SK-N-SH (cell line): ENCODE measurements at regions of chr20 and their contacts with region 1.

Region 1: DNA sequence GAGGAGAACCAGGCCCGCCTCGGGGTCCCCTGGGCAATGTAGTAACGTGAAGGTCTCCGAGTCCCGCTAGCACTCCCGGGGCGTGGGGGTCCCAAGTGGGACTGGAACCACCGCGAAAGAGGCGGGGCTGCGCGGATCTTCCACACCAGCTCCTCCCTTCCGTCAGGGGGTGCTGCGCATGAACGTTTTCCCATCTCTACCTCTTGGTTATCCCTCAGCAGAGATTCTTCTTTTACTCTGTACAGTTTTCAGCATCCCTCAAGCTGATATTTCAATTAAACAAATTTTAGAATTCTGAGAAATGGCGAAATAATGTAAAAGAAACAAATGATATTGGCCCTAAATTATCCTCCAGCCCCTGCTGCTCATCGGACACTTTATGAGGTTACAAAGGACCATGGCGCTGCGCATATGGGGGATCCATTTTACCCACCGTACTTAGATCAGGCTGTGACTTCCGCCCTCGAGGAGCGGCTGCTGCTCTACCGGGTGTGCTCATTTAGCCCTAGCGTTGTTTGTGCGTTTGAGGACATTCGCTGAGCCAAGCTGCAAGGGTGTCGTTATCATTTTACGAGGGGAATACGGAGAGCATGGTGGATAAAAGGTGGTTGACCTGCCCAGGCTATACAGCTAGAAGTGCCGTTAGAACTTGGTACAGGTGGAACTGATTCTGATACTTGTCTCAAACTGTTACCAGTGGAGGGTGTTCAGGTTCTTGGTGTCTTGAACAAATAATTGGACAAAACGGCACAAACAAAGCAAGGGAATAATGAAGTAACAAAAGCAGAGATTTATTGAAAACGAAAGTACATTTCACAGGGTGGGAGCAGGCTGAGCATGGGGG is 75.2 kb upstream of the CHD6 start:
- DNase-seq: peak; percentile 77
- H3K4me3 ChIP-seq: peak overlapping the region; percentile 79 to 80
- H3K27ac ChIP-seq: peak overlapping the region; percentile 20 to 95; a peak in 3 of 4 replicates
- H3K4me1 ChIP-seq: peaks cover 0 to 5% of the 10 kb centered on the region in 2 experiments; a peak in 1 of 4 replicates
- H3K27me3 ChIP-seq: no peaks in the 10 kb centered on the region; the same call in 1 of the 2 replicates
- CTCF ChIP-seq: peak; percentile 76
- EP300 ChIP-seq: no peak
- RAD21 ChIP-seq: no peak

Region 2: GRCh38 chr20:41617931-41618806 is 75.2 kb before region 1 on chr20 and contains the start of gene CHD6:
- CTCF ChIA-PET with region 1: interaction called, 5 read pairs
- POLR2A ChIA-PET with region 1: interaction called, 15 read pairs
- DNase-seq: peak; percentile 98
- H3K4me3 ChIP-seq: peak within 1 kb of the TSS; percentile 72 to 92
- H3K27ac ChIP-seq: peak within 1 kb of the TSS; percentile 70 to 94
- H3K4me1 ChIP-seq: peaks cover 15 to 18% of the 10 kb centered on the region in 2 experiments; a peak in 3 of 4 replicates
- H3K27me3 ChIP-seq: no peaks in the 10 kb centered on the region
- CTCF ChIP-seq: no peak
- EP300 ChIP-seq: no peak
- RAD21 ChIP-seq: no peak
- polyA plus RNA-seq, gene CHD6: 7.1 and 8.7 TPM in 2 replicates

Region 3: DNA sequence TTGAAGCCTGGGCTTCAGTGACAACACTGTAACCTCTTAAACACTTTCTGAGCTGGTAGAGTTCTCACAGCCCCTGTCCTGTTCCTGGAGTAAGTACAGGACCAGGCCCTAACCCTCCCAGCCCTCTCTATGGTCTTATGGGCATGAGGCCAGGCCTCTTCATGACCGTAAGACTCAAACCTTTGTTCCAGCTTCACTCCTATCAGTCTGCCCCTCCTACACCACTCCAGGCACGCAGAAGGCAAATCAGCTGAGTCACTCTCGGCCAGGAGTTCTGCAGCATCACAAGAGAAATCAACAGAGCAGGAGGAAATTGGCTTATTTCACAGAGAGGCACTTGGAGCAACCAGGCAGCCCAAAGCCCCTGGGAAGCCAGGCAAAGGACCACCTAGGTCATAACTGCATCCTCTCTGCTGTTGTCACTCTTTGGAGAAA is 49.8 kb before region 1 on chr20:
- CTCF ChIA-PET with region 1: no interaction called
- POLR2A ChIA-PET with region 1: no interaction called
- DNase-seq: no peak
- H3K4me3 ChIP-seq: no peak overlapping the region
- H3K27ac ChIP-seq: no peak overlapping the region
- H3K4me1 ChIP-seq: peaks cover 0 to 2% of the 10 kb centered on the region in 2 experiments; a peak in 1 of 4 replicates
- H3K27me3 ChIP-seq: peaks cover 4% of the 10 kb centered on the region; the same call in 1 of the 2 replicates
- CTCF ChIP-seq: no peak
- EP300 ChIP-seq: no peak
- RAD21 ChIP-seq: no peak

Region 4: GRCh38 chr20:41717483-41717882 is 24.1 kb after region 1 on chr20:
- CTCF ChIA-PET with region 1: interaction called, 29 read pairs
- POLR2A ChIA-PET with region 1: no interaction called
- DNase-seq: peak; percentile 26
- H3K4me3 ChIP-seq: no peak overlapping the region
- H3K27ac ChIP-seq: no peak overlapping the region
- H3K4me1 ChIP-seq: peaks cover 0 to 7% of the 10 kb centered on the region in 2 experiments; a peak in 1 of 4 replicates
- H3K27me3 ChIP-seq: no peaks in the 10 kb centered on the region
- CTCF ChIP-seq: no peak
- EP300 ChIP-seq: no peak
- RAD21 ChIP-seq: no peak

Region 5: GRCh38 chr20:41726727-41727126 is 33.4 kb after region 1 on chr20:
- CTCF ChIA-PET with region 1: interaction called, 12 read pairs
- POLR2A ChIA-PET with region 1: no interaction called
- DNase-seq: no peak
- H3K4me3 ChIP-seq: no peak overlapping the region
- H3K27ac ChIP-seq: no peak overlapping the region
- H3K4me1 ChIP-seq: no peaks in the 10 kb centered on the region
- H3K27me3 ChIP-seq: no peaks in the 10 kb centered on the region
- CTCF ChIP-seq: no peak
- EP300 ChIP-seq: no peak
- RAD21 ChIP-seq: no peak

Region 6: DNA sequence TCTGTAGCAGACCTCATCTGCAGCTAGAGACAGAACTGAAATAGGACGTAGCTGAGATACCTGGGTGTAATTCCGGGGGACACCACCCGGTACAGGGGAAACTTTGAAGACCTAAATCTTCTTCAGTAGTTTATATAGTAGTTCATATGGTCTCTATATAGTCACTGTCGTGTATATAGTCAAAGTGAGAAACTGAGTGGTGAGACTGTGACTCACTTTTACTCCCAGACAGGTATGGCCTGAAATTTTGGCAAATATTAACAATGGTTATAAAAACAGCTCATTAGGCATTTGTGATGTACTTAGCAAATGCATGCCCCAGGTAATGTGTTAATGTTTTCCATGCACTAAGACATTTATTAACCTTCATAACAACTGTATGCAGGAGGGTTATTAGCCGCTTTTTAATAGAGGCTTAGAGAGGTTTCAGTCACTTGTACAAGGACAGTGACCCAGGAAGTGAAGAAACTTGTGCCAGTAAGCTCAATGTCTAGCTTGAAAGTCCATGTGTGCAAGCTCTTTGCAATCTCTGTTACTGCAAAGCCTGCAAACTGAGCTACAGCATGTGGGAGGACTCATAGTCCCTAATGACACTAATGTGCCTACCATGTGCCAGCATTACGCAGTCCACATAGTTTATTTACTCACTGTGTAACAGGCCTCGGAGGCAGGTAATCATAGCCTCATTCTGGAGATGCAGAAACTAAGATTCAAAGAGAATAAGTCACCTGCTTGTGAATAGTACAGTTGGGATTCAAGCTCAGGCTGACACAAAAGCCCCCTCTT is 90.3 kb after region 1 on chr20:
- CTCF ChIA-PET with region 1: no interaction called
- POLR2A ChIA-PET with region 1: no interaction called
- DNase-seq: no peak
- H3K4me3 ChIP-seq: no peak overlapping the region
- H3K27ac ChIP-seq: no peak overlapping the region
- H3K4me1 ChIP-seq: no peaks in the 10 kb centered on the region
- H3K27me3 ChIP-seq: no peaks in the 10 kb centered on the region
- CTCF ChIP-seq: no peak
- EP300 ChIP-seq: no peak
- RAD21 ChIP-seq: no peak

Region 7: DNA sequence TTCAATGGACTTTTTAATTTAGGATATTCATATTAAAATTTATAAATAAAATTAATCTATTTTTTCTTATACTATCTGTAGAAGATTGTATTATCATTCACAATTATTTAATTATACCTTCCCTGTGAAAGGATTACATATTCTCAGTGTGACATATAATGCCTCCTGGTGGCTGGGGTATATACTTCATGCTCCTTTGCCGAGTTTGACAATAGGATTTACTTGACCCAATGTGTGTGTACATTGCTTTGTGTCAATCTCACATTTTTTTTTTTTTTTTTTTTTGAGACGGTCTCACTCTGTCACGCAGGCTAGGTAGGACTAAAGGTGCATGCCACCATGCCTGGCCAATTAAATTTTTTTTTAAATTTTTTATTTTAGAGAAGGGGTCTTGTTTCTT is 154.8 kb after region 1 on chr20:
- CTCF ChIA-PET with region 1: no interaction called
- POLR2A ChIA-PET with region 1: no interaction called
- DNase-seq: no peak
- H3K4me3 ChIP-seq: no peak overlapping the region
- H3K27ac ChIP-seq: no peak overlapping the region
- H3K4me1 ChIP-seq: no peaks in the 10 kb centered on the region
- H3K27me3 ChIP-seq: no peaks in the 10 kb centered on the region
- CTCF ChIP-seq: no peak
- EP300 ChIP-seq: no peak
- RAD21 ChIP-seq: peak; percentile 18; the same call in 1 of the 2 replicates